Dendritic cell treated with granulocyte-macrophage colony-stimulating factor and Interleukin-4, amounts not matched to agents 40 ng/mL and 50 ng/mL, for 4 days (primary cell): ENCODE measurements at regions of chr3 and their contacts with region 1.

Region 1: DNA sequence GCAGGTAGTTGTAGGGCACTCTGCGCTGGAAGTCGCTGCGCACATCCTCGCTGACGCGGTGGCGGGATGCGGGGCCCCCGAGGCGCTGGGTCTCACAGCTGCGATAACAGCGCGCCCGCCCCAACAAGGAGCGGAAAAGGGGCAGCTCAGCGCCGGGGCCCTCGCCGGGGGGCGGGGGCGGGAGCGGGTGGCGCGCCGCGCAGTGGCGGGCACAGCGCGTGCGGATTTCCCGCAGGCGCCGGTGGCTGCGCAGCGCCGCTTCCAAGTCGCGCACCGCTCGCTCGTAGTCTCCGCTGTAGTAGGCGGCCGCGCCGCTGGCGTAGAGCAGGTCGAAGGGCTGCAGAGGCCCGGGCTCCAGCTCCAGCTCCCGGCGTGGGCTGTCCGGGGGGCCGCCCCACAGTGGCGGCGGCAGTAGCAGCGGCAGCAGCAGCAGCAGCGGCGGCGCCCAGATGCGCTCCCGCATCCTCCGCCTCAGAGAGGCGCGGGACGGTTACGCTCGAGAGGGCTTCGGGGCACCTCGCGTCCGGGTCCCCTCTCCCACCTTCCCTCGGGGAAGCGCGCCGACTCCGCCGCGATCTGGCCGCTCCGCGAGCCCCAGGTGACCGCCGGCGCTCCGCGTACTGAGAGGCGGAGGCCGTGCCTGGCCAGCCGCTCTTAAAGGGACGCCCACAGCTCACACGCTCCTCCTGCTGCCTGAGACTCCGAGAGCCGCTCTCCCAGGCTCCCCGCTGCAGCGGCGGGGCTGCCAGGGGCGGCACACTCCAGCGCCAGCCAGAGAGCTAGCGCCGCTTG is at the start of gene P3H2:
- H3K4me3 Mint-ChIP-seq: peak within 1 kb of the TSS; percentile 79
- H3K27ac Mint-ChIP-seq: peak within 1 kb of the TSS; percentile 54
- H3K4me1 Mint-ChIP-seq: peaks cover 15% of the 10 kb centered on the region
- H3K27me3 Mint-ChIP-seq: peaks cover 60% of the 10 kb centered on the region

Region 2: DNA sequence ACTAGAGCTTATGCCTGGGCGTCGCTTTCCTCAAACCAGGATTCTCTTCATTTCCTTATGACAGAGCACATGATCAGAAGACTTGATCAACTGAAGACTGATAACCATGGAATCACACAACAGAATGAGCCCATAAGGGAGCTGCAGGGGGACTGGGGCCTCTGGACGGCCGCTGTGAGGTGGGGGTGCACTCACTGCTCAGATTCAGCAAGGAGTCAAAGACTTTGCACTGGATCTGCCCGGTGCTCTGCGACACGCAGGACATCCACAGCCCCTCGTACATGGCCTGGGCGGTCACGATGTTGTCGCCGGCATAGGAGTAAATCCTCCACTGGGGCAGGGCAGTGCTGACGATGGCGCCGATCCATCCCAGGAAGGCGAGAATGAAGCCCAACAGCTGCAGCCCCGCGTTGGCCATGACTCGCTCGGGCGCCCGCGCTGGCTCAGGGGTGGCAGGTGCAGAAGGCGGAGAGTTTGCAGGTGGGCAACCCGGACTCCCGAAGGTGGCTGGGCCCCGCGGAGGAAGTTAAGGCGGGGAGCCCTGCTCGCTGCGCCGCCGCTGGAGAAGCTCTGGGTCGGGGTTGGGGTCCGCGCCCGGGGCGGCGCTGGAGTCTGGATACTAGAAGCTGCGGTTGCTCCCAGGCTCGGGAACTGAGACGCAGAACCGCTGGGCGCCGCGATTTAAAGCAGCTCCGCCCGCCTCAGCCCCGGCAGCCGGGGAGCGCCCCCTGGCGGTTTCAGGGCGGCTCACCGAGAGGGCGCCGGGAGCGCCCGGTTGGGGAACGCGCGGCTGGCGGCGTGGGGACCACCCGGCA is 201.5 kb after region 1 on chr3 and contains the start of gene CLDN1:
- intact Hi-C with region 1: loop called (anchors 5 kb)
- H3K4me3 Mint-ChIP-seq: peak within 1 kb of the TSS; percentile 72
- H3K27ac Mint-ChIP-seq: peak within 1 kb of the TSS; percentile 79
- H3K4me1 Mint-ChIP-seq: peaks cover 24% of the 10 kb centered on the region
- H3K27me3 Mint-ChIP-seq: peaks cover 59% of the 10 kb centered on the region